ENCODE measurements at regions of chr1 and their contacts with region 1.

Region 1: GRCh38 chr1:39973503-39974135 is 18.7 kb downstream of the MFSD2A start:
- DNase-seq: peak; percentile 80
- H3K4me3 Mint-ChIP-seq: no peak overlapping the region
- H3K27ac Mint-ChIP-seq: no peak overlapping the region
- H3K4me1 Mint-ChIP-seq: peaks cover 38% of the 10 kb centered on the region
- H3K27me3 Mint-ChIP-seq: no peaks in the 10 kb centered on the region
- CTCF ChIP-seq: peak; percentile 94

Region 2: GRCh38 chr1:39901698-39902459 is 71.7 kb before region 1 on chr1 and contains the start of gene MYCL:
- CTCF ChIA-PET with region 1: interaction called, 21 read pairs
- POLR2A ChIA-PET with region 1: interaction called, 3 read pairs
- intact Hi-C with region 1: loop called (anchors 5 kb)
- DNase-seq: peak; percentile 79
- H3K4me3 Mint-ChIP-seq: peak within 1 kb of the TSS; percentile 68
- H3K27ac Mint-ChIP-seq: no peak within 1 kb of the TSS
- H3K4me1 Mint-ChIP-seq: no peaks in the 10 kb centered on the region
- H3K27me3 Mint-ChIP-seq: peaks cover 14% of the 10 kb centered on the region
- CTCF ChIP-seq: peak; percentile 68
- total RNA-seq, gene MYCL: 0.63 and 1.1 TPM in 2 replicates

Region 3: GRCh38 chr1:39926343-39926793 is 47.3 kb before region 1 on chr1:
- CTCF ChIA-PET with region 1: interaction called, 373 read pairs
- POLR2A ChIA-PET with region 1: interaction called, 26 read pairs
- intact Hi-C with region 1: no loop called
- DNase-seq: peak; percentile 63
- H3K4me3 Mint-ChIP-seq: peak overlapping the region; percentile 20
- H3K27ac Mint-ChIP-seq: peak overlapping the region; percentile 81
- H3K4me1 Mint-ChIP-seq: peaks cover 49% of the 10 kb centered on the region
- H3K27me3 Mint-ChIP-seq: no peaks in the 10 kb centered on the region
- CTCF ChIP-seq: no peak

Region 4: GRCh38 chr1:39940252-39940651 is 33.4 kb before region 1 on chr1:
- CTCF ChIA-PET with region 1: interaction called, 52 read pairs
- POLR2A ChIA-PET with region 1: interaction called, 41 read pairs
- intact Hi-C with region 1: no loop called
- DNase-seq: no peak
- H3K4me3 Mint-ChIP-seq: no peak overlapping the region
- H3K27ac Mint-ChIP-seq: no peak overlapping the region
- H3K4me1 Mint-ChIP-seq: peaks cover 27% of the 10 kb centered on the region
- H3K27me3 Mint-ChIP-seq: no peaks in the 10 kb centered on the region
- CTCF ChIP-seq: no peak

Region 5: DNA sequence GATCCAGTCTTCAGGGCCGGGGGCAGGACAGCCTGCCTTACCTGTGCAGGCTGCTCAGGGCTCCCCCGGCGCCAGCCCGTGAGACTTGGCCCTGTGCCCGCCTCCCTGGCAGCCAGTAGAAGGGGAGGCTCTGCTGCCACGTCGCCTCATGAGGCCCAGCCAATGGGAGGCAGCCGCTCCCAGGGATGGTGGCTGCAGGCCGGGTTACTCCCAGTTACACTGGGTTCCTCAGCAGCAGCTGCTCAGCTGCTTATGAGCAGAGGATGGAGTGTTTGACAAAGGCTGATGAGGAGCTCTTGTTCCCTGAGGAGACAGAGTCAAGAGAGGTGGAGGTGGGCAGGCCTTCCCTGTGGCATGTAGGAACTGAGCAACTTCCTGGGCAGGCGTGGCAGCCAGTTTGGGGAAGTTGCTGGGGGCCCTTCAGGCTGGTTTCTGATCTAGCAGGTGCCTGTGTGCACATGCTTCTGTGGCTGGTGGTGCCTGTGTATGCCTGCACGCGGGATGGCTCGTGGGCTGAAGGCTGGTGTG is 13.1 kb before region 1 on chr1:
- CTCF ChIA-PET with region 1: interaction called, 18 read pairs
- POLR2A ChIA-PET with region 1: interaction called, 89 read pairs
- intact Hi-C with region 1: no loop called
- DNase-seq: peak; percentile 84
- H3K4me3 Mint-ChIP-seq: no peak overlapping the region
- H3K27ac Mint-ChIP-seq: peak overlapping the region; percentile 39
- H3K4me1 Mint-ChIP-seq: peaks cover 28% of the 10 kb centered on the region
- H3K27me3 Mint-ChIP-seq: no peaks in the 10 kb centered on the region
- CTCF ChIP-seq: no peak

Region 6: DNA sequence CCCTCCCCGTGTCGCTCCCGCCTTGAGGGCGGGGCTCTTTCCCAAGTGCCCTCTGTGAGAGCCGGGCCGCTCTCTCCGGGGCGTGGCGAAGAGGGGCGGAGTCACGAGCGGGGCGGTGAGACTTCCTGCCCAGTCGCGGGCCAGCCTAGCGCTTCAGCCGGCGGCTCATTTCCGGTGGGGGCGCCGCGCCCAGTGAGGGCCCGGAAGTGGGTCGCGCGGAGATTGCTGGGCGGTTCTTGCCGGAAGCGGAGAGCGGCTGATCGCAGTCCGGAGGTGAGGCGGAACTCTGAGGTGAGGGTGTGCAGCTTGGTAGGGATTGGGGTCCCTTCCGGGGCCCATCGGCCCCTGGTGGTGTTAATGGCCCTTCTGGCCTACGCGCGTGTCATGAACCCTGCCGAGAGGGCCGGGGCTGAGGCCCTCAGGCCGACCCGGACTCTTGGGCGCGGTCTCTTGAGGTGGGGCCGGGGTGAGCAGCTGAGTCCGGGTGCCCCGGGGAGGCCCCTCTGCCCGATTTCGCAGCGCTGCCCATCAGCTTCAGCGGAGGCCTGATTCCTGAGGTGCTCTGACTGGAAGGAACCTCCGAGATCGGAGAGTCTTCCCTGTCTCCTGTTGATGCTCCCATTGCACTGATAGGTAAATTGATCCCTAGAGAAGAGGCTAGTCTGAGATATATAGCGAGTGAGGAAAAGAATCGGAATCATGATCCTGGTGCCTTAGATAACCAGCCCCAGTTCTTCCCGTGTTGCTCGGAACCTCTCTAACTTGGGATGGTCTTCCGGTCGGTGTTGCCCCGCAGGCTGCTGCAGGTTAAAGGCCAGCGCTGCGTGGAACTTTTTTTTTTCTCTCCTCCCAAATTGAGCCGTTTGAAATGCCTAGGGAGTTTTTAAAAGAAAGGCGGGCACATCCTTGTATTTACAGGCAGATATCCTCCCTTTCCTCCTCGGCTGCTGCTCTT is 67.2 kb after region 1 on chr1 and contains the start of gene CAP1:
- CTCF ChIA-PET with region 1: interaction called, 80 read pairs
- POLR2A ChIA-PET with region 1: interaction called, 11 read pairs
- intact Hi-C with region 1: no loop called
- DNase-seq: peak; percentile 99
- H3K4me3 Mint-ChIP-seq: peak within 1 kb of the TSS; percentile 93
- H3K27ac Mint-ChIP-seq: peak within 1 kb of the TSS; percentile 99
- H3K4me1 Mint-ChIP-seq: peaks cover 33% of the 10 kb centered on the region
- H3K27me3 Mint-ChIP-seq: no peaks in the 10 kb centered on the region
- CTCF ChIP-seq: no peak
- total RNA-seq, gene CAP1: 297 and 339 TPM in 2 replicates